HAP-1 (cell line): ENCODE measurements at regions of chr3 and their contacts with region 1.

Region 1: DNA sequence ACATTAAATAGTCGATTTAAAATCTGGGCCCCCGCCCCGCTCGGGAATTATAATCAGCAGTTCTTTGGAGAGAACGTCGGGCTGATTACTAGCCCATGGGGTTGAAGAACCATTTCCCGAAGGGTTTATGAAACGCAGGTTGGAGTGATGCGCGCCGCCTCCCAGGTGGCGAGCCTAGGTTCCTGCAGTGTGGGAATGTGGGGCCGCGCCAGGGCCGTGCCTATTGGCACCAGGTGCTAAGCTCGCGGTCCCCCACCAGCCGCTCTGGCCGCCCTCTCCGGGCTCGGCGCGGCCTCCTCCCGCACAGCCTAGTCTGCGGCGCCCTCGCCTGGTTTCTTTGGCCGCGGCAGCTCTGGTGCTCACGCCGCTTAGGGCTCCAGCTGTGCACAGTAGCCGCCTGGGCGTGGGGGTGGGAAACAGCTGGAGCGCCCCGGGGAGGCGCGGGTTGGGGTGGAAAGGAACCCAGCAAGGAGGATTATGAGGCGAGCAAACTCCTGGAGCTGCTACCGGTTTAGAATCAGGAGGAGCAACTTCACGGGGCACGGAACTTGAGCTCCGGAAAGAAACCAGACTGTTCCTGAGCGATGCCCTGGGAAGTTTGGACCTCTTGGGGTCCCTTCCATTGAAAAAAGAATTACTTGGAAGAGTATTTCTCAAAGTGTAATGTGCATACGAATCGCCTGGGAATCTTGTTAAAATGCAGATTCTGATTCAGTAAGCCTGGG is 5.6 kb upstream of the MECOM start:
- DNase-seq: peak; percentile 71 to 89
- H3K4me3 ChIP-seq: peak overlapping the region; percentile 33
- H3K4me1 ChIP-seq: peaks cover 15% of the 10 kb centered on the region
- H3K27me3 ChIP-seq: peaks cover 3% of the 10 kb centered on the region; the same call in 1 of the 2 replicates

Region 2: GRCh38 chr3:169133178-169134161 is 535.6 kb before region 1 on chr3:
- in situ Hi-C with region 1: loop called (anchors 10 kb)
- DNase-seq: peak in 1 of 2 experiments; percentile 47
- H3K4me3 ChIP-seq: no peak overlapping the region
- H3K4me1 ChIP-seq: peaks cover 38% of the 10 kb centered on the region
- H3K27me3 ChIP-seq: no peaks in the 10 kb centered on the region

Region 3: GRCh38 chr3:169295126-169295525 is 374.0 kb before region 1 on chr3:
- in situ Hi-C with region 1: no loop called
- DNase-seq: peak in 1 of 2 experiments; percentile 17
- H3K4me3 ChIP-seq: no peak overlapping the region
- H3K4me1 ChIP-seq: no peaks in the 10 kb centered on the region
- H3K27me3 ChIP-seq: no peaks in the 10 kb centered on the region

Region 4: GRCh38 chr3:169818316-169818715 is 149.2 kb after region 1 on chr3:
- in situ Hi-C with region 1: no loop called
- DNase-seq: no peak
- H3K4me3 ChIP-seq: no peak overlapping the region
- H3K4me1 ChIP-seq: peaks cover 6% of the 10 kb centered on the region
- H3K27me3 ChIP-seq: no peaks in the 10 kb centered on the region